BJ (cell line): ENCODE measurements at regions of chr13 and their contacts with region 1.

Region 1: DNA sequence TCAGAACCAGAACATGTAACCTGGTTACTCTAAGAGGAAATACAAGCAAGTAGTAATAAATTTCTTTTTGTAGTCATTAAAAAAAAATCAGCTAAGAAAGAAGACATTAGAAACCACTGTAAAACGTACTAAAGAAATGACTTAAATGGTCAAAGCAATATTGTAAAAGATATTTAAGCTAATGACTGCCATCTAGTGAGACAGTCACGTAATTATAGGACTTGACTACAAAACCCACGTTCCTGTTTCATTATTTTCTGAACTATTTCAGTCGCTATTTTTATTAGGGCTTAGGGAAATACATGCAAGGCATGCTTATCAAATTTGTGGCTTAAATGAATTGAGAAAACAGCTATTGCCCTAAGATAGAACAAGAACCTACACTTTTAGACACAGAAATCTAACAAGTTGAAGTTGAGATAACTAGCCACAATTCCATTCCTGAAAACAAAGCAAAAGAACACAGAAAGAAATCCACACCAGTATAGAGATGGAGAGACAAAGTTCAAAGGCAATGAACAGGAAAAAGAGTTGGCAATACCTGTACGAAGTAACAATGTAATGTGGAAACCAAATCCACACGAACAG is 17.9 kb downstream of the ALG5 start:
- DNase-seq: peak; percentile 36
- H3K4me3 ChIP-seq: no peak overlapping the region
- H3K27me3 ChIP-seq: no peaks in the 10 kb centered on the region
- CTCF ChIP-seq: peak; percentile 46

Region 2: DNA sequence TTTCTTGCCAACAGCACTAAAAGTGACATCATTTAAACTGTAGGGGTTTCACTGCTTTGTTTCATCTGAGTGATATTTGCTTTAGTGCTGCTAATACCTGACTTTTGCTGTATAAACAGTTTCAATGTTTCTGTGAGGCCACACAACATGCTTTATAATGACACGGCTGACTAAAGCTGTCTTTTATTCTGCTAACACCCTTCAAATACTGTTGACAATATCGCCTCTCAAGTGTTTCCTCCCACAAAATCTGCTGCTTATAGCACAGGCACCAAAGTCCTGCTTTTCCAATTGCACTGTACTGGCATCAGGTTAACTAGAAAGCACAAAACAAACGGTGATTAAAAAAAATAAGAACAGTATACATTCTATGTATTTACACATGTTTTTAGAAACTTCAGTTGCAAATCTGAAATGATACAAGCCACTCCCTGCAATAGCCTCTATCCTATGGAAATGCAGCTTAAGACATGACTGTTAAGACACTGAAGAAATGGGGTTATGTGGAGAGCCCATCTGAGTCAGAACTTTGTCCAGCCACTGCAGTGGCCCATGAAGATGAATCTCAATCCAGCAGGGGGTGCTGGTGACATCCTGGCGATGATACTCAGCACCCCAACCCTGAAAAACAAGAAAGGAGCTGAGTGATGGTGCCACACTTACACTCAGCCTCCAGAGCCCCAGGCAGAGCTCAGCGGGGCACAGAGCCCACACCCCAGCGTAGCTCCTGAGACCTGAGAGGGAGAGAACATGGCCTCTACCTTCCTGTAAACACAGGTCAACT is 132.9 kb before region 1 on chr13:
- CTCF ChIA-PET with region 1: interaction called, 18 read pairs
- POLR2A ChIA-PET with region 1: no interaction called
- DNase-seq: no peak
- H3K4me3 ChIP-seq: no peak overlapping the region
- H3K27me3 ChIP-seq: no peaks in the 10 kb centered on the region
- CTCF ChIP-seq: no peak